ENCODE measurements at regions of chr16 and their contacts with region 1.

Region 1: DNA sequence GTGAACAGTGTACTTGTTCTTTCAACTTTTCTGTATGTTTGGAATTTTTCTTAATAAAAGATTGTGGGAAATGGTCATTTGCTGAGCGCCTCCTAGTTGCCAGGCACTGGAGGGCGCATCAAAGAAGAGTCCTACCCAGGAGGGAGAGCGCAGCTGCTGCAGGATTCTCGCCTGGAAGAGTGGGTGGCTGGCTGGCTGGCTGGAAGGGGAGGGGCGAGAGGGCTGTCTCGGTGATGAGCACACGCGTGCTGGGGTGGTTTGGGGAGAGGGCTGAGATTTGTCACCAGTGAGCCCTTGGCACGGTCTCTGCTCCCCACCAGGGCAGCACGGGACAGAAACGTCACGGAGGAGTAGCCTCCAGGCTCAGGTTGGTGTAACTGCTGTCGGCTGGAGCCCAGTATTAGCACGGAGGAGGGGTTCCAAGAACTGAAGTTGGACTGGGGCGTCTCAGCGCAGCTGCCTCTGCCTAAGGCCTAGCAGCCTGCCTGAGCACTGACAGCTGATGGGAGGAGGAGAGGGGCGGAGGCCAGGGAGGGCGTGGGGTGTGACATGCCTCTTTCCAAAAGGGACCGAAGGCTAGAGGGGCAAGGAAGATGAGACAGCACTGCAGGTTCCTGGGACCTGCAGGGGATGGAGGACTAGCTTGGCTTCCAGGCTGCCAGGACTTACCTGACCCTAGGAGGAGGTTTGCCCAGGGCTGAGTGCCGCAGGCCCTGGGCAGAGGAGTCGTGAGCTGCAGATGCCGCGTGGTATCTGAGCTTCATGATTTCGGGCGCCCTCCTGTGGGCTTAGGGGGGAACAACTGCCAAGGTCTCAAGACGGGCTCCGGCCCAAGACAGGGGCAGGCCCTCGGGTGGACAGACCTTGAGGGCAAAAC is 5.7 kb downstream of the LDHD start:
- DNase-seq: peak; percentile 62
- ATAC-seq: peak; percentile 92
- H3K4me3 ChIP-seq: no peak overlapping the region
- H3K27ac ChIP-seq: no peak overlapping the region; the same call in 1 of the 2 replicates
- H3K4me1 ChIP-seq: peaks cover 36% of the 10 kb centered on the region
- H3K27me3 ChIP-seq: no peaks in the 10 kb centered on the region
- CTCF ChIP-seq: peak; percentile 95 to 97 (median 96)
- EP300 ChIP-seq: no peak
- POLR2A ChIP-seq: 0 out of 2 replicates have a peak, but pooled peaks have one; percentile 29
- RAD21 ChIP-seq: peak; percentile 97

Region 2: GRCh38 chr16:74666425-74667254 is 444.2 kb before region 1 on chr16 and contains the start of gene RFWD3:
- CTCF ChIA-PET with region 1: no interaction called
- POLR2A ChIA-PET with region 1: no interaction called
- RAD21 ChIA-PET with region 1: no interaction called
- SMC1A ChIA-PET with region 1: no interaction called
- in situ Hi-C with region 1: no loop called
- intact Hi-C with region 1: no loop called
- DNase-seq: peak; percentile 94
- ATAC-seq: peak; percentile 100
- H3K4me3 ChIP-seq: peak within 1 kb of the TSS; percentile 76
- H3K27ac ChIP-seq: peak within 1 kb of the TSS; percentile 89
- H3K4me1 ChIP-seq: peaks cover 5% of the 10 kb centered on the region
- H3K27me3 ChIP-seq: no peaks in the 10 kb centered on the region
- CTCF ChIP-seq: no peak
- EP300 ChIP-seq: no peak
- POLR2A ChIP-seq: peak; percentile 99
- RAD21 ChIP-seq: no peak
- polyA plus RNA-seq, gene RFWD3: 10.7 to 16.3 TPM

Region 3: DNA sequence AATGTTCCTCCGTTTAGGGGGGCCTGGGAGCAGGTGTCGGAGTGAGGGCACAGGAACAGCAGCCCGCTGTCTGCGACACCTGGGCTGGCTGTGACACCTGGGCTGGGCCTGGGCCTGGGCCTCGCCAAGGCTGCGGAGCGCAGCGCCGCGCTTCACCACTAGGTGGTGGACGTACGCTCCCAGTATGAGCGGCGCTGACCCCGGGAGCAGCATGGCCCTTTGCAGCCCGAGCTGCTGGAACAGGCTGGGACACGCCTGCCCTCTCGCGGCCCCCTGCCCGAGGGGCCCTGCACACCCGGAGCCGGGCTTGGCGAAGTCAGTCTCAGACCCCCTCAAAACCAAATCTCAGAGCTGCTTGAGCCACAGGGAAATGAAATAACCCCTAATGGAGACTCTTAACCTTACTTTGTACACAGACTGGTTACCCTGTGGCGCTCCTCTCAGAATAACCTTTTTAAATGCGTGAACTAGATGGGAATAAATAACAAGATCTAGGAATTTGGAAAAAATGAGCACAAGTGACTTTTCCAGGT is 297.7 kb before region 1 on chr16:
- CTCF ChIA-PET with region 1: interaction called, 18 read pairs
- POLR2A ChIA-PET with region 1: no interaction called
- RAD21 ChIA-PET with region 1: interaction called, 12 read pairs
- SMC1A ChIA-PET with region 1: interaction called, 7 read pairs
- in situ Hi-C with region 1: no loop called
- intact Hi-C with region 1: loop called (anchors 1 kb)
- DNase-seq: peak; percentile 11
- ATAC-seq: peak; percentile 100
- H3K4me3 ChIP-seq: no peak overlapping the region; the same call in 1 of the 2 replicates
- H3K27ac ChIP-seq: no peak overlapping the region
- H3K4me1 ChIP-seq: no peaks in the 10 kb centered on the region
- H3K27me3 ChIP-seq: no peaks in the 10 kb centered on the region; a peak in 1 of 4 replicates
- CTCF ChIP-seq: peak; percentile 96 to 99 (median 98); a peak in 5 of 6 replicates
- EP300 ChIP-seq: no peak
- POLR2A ChIP-seq: no peak
- RAD21 ChIP-seq: peak; percentile 80

Region 4: GRCh38 chr16:74931445-74931844 is 179.4 kb before region 1 on chr16:
- CTCF ChIA-PET with region 1: interaction called, 9 read pairs
- POLR2A ChIA-PET with region 1: no interaction called
- RAD21 ChIA-PET with region 1: interaction called, 12 read pairs
- SMC1A ChIA-PET with region 1: no interaction called
- in situ Hi-C with region 1: no loop called
- intact Hi-C with region 1: no loop called
- DNase-seq: no peak
- ATAC-seq: peak; percentile 63
- H3K4me3 ChIP-seq: no peak overlapping the region
- H3K27ac ChIP-seq: no peak overlapping the region
- H3K4me1 ChIP-seq: no peaks in the 10 kb centered on the region
- H3K27me3 ChIP-seq: no peaks in the 10 kb centered on the region
- CTCF ChIP-seq: no peak
- EP300 ChIP-seq: no peak
- POLR2A ChIP-seq: no peak
- RAD21 ChIP-seq: no peak

Region 5: GRCh38 chr16:74998481-74999218 is 112.2 kb before region 1 on chr16 and contains the start of gene ZNRF1:
- CTCF ChIA-PET with region 1: interaction called, 90 read pairs
- POLR2A ChIA-PET with region 1: interaction called, 13 read pairs
- RAD21 ChIA-PET with region 1: interaction called, 92 read pairs
- SMC1A ChIA-PET with region 1: interaction called, 69 read pairs
- in situ Hi-C with region 1: loop called (anchors 5 kb)
- intact Hi-C with region 1: loop called (anchors 1 kb)
- DNase-seq: peak; percentile 73
- ATAC-seq: peak; percentile 82
- H3K4me3 ChIP-seq: peak within 1 kb of the TSS; percentile 72
- H3K27ac ChIP-seq: no peak within 1 kb of the TSS
- H3K4me1 ChIP-seq: peaks cover 8% of the 10 kb centered on the region
- H3K27me3 ChIP-seq: no peaks in the 10 kb centered on the region
- CTCF ChIP-seq: peak; percentile 60 to 72 (median 62); a peak in 5 of 6 replicates
- EP300 ChIP-seq: peak; percentile 33 to 81; a peak in 3 of 4 replicates
- POLR2A ChIP-seq: peak; percentile 58
- RAD21 ChIP-seq: peak; percentile 86
- polyA plus RNA-seq, gene ZNRF1: 12.0 to 14.2 TPM

Region 6: GRCh38 chr16:75074920-75075687 is 35.8 kb before region 1 on chr16:
- CTCF ChIA-PET with region 1: interaction called, 7 read pairs
- POLR2A ChIA-PET with region 1: no interaction called
- RAD21 ChIA-PET with region 1: interaction called, 8 read pairs
- SMC1A ChIA-PET with region 1: interaction called, 5 read pairs
- in situ Hi-C with region 1: no loop called
- intact Hi-C with region 1: loop called (anchors 5 kb)
- DNase-seq: peak; percentile 96
- ATAC-seq: peak; percentile 97
- H3K4me3 ChIP-seq: peak overlapping the region; percentile 41; the same call in 1 of the 2 replicates
- H3K27ac ChIP-seq: peak overlapping the region; percentile 80
- H3K4me1 ChIP-seq: peaks cover 21% of the 10 kb centered on the region
- H3K27me3 ChIP-seq: no peaks in the 10 kb centered on the region
- CTCF ChIP-seq: no peak
- EP300 ChIP-seq: peak; percentile 16 to 22; a peak in 2 of 4 replicates
- POLR2A ChIP-seq: peak; percentile 58
- RAD21 ChIP-seq: 0 out of 2 replicates have a peak, but pooled peaks have one; percentile 18